ENCODE measurements at regions of chr13 and their contacts with region 1.

Region 1: GRCh38 chr13:26698392-26699196 is 62.0 kb downstream of the GPR12 start:
- DNase-seq: peak; percentile 80
- ATAC-seq: peak; percentile 80
- H3K4me3 Mint-ChIP-seq: no peak overlapping the region
- H3K27ac Mint-ChIP-seq: no peak overlapping the region
- H3K4me1 Mint-ChIP-seq: no peaks in the 10 kb centered on the region
- H3K27me3 Mint-ChIP-seq: peaks cover 14% of the 10 kb centered on the region

Region 2: GRCh38 chr13:26482451-26483197 is 216.0 kb before region 1 on chr13:
- CTCF ChIA-PET with region 1: interaction called, 28 read pairs
- DNase-seq: peak; percentile 76
- ATAC-seq: peak; percentile 80
- H3K4me3 Mint-ChIP-seq: no peak overlapping the region
- H3K27ac Mint-ChIP-seq: peak overlapping the region; percentile 43
- H3K4me1 Mint-ChIP-seq: peaks cover 8% of the 10 kb centered on the region
- H3K27me3 Mint-ChIP-seq: no peaks in the 10 kb centered on the region

Region 3: GRCh38 chr13:26498656-26499591 is 199.7 kb before region 1 on chr13:
- CTCF ChIA-PET with region 1: interaction called, 22 read pairs
- DNase-seq: no peak
- ATAC-seq: no peak
- H3K4me3 Mint-ChIP-seq: no peak overlapping the region
- H3K27ac Mint-ChIP-seq: no peak overlapping the region
- H3K4me1 Mint-ChIP-seq: peaks cover 3% of the 10 kb centered on the region
- H3K27me3 Mint-ChIP-seq: peaks cover 16% of the 10 kb centered on the region

Region 4: GRCh38 chr13:26721251-26722121 is 22.9 kb after region 1 on chr13:
- CTCF ChIA-PET with region 1: interaction called, 10 read pairs
- DNase-seq: peak; percentile 75
- ATAC-seq: peak; percentile 89
- H3K4me3 Mint-ChIP-seq: peak overlapping the region; percentile 64
- H3K27ac Mint-ChIP-seq: peak overlapping the region; percentile 85
- H3K4me1 Mint-ChIP-seq: peaks cover 23% of the 10 kb centered on the region
- H3K27me3 Mint-ChIP-seq: no peaks in the 10 kb centered on the region